Activated CD4-positive, alpha-beta T cell treated with anti-CD3 and anti-CD28 coated beads for 36 hours (primary cell): ENCODE measurements at regions of chr2 and their contacts with region 1.

Region 1: GRCh38 chr2:100580367-100581276 is 17.8 kb downstream of the PDCL3 start:
- DNase-seq: peak; percentile 64
- ATAC-seq: peak; percentile 88
- H3K4me3 Mint-ChIP-seq: peak overlapping the region; percentile 56
- H3K27ac Mint-ChIP-seq: peak overlapping the region; percentile 95
- H3K4me1 Mint-ChIP-seq: peaks cover 38% of the 10 kb centered on the region
- H3K27me3 Mint-ChIP-seq: no peaks in the 10 kb centered on the region

Region 2: GRCh38 chr2:100416935-100417710 is 163.5 kb before region 1 on chr2 and contains the start of gene CHST10:
- CTCF ChIA-PET with region 1: no interaction called
- POLR2A ChIA-PET with region 1: interaction called, 3 read pairs
- intact Hi-C with region 1: loop called in 1 of 2 experiments (anchors 5 kb)
- DNase-seq: peak; percentile 76
- ATAC-seq: peak; percentile 97
- H3K4me3 Mint-ChIP-seq: peak within 1 kb of the TSS; percentile 77
- H3K27ac Mint-ChIP-seq: peak within 1 kb of the TSS; percentile 72
- H3K4me1 Mint-ChIP-seq: peaks cover 24% of the 10 kb centered on the region
- H3K27me3 Mint-ChIP-seq: no peaks in the 10 kb centered on the region
- total RNA-seq, gene CHST10: 5.9 to 6.2 TPM